ENCODE measurements at regions of chr9 and their contacts with region 1.

Region 1: DNA sequence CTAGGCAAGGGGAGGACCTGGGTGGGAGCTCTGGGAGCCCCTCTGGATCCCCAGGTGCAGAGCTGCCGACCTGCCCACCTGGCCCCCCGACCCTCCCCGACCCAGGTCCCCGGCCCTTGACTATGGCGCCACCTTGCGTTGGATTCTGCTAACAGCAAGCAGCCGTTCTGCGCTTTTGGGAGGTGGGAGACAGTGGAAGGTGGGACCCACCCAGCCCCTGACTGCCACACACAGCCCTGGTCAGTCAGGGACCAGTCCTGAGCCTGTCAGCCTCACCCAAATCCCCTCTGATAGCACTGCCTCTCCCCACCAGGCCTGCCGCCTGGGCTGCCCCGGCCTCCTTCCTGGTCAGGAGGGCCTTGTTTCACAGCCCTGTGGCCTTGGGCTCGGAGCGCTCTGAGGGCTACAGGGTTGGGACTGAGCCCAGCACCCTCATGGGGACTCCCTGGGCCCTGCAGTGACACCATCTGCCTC is 77.9 kb downstream of the HMCN2 start:
- DNase-seq: no peak
- H3K4me3 ChIP-seq: no peak overlapping the region
- H3K27ac ChIP-seq: no peak overlapping the region
- H3K4me1 ChIP-seq: no peaks in the 10 kb centered on the region
- H3K27me3 ChIP-seq: no peaks in the 10 kb centered on the region
- CTCF ChIP-seq: peak; percentile 85

Region 2: GRCh38 chr9:130172161-130172857 is 171.2 kb before region 1 on chr9 and contains the start of gene NCS1:
- CTCF ChIA-PET with region 1: no interaction called
- POLR2A ChIA-PET with region 1: no interaction called
- intact Hi-C with region 1: no loop called
- DNase-seq: peak in 1 of 2 experiments; percentile 76
- H3K4me3 ChIP-seq: peak within 1 kb of the TSS; percentile 62
- H3K27ac ChIP-seq: no peak within 1 kb of the TSS
- H3K4me1 ChIP-seq: peaks cover 4% of the 10 kb centered on the region; the same call in 1 of the 2 replicates
- H3K27me3 ChIP-seq: no peaks in the 10 kb centered on the region
- CTCF ChIP-seq: no peak
- total RNA-seq, gene NCS1: 53.0 and 59.2 TPM in 2 replicates

Region 3: DNA sequence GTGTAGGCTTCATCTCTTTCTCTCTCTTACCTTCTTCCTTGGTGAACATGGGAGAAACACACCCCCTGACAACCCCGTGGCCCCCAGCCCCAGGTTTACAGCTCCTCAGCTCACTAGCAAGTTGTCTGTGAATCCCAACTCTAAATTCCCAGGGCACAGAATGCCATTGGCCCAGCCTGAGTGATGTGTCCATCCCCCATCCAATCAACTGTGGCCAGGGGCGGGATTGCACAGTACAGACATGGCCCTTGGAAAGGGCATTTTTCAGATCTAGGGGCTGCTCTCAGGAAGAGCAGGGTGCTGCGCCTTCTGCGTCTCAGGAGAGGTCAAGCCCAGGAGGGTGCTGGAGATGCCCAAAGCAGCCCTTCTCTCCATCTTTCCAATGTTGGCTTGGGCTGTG is 53.1 kb after region 1 on chr9:
- CTCF ChIA-PET with region 1: interaction called, 12 read pairs
- POLR2A ChIA-PET with region 1: no interaction called
- intact Hi-C with region 1: no loop called
- DNase-seq: no peak
- H3K4me3 ChIP-seq: no peak overlapping the region
- H3K27ac ChIP-seq: no peak overlapping the region
- H3K4me1 ChIP-seq: no peaks in the 10 kb centered on the region
- H3K27me3 ChIP-seq: no peaks in the 10 kb centered on the region
- CTCF ChIP-seq: no peak

Region 4: DNA sequence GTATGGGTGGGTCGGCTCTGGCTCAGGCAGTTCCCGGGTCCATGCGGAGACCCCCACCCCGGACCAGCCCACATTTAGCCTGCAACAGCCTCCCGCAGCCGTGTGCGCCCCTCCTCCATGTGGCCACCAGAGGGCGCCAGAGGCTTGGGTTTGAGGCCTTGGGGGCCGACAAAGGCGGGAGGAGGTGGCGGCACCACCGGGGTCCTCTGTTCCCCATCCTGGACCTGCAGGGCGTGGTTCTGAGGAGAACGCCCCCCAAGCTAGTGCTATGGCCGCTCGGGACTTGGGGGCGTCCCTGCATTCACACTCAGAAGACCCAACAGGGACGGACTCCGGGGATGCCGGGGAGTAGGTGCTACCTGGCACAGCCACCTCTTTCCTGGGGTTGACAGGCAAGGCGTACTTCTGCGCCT is 117.7 kb after region 1 on chr9:
- CTCF ChIA-PET with region 1: no interaction called
- POLR2A ChIA-PET with region 1: no interaction called
- intact Hi-C with region 1: no loop called
- DNase-seq: peak in 1 of 2 experiments; percentile 55
- H3K4me3 ChIP-seq: no peak overlapping the region
- H3K27ac ChIP-seq: no peak overlapping the region
- H3K4me1 ChIP-seq: no peaks in the 10 kb centered on the region
- H3K27me3 ChIP-seq: no peaks in the 10 kb centered on the region
- CTCF ChIP-seq: peak; percentile 93

Region 5: GRCh38 chr9:130518943-130519799 is 175.7 kb after region 1 on chr9:
- CTCF ChIA-PET with region 1: no interaction called
- POLR2A ChIA-PET with region 1: no interaction called
- intact Hi-C with region 1: no loop called
- DNase-seq: no peak
- H3K4me3 ChIP-seq: no peak overlapping the region
- H3K27ac ChIP-seq: no peak overlapping the region
- H3K4me1 ChIP-seq: no peaks in the 10 kb centered on the region
- H3K27me3 ChIP-seq: no peaks in the 10 kb centered on the region
- CTCF ChIP-seq: no peak

Measured in PC-9 (cell line).